Activated naive CD4-positive, alpha-beta T cell treated with anti-CD3 and anti-CD28 coated beads, Interleukin-2, amount 10 ng/mL, durations not matched to agents 7 days and 5 days (primary cell): ENCODE measurements at regions of chr9 and their contacts with region 1.

Region 1: DNA sequence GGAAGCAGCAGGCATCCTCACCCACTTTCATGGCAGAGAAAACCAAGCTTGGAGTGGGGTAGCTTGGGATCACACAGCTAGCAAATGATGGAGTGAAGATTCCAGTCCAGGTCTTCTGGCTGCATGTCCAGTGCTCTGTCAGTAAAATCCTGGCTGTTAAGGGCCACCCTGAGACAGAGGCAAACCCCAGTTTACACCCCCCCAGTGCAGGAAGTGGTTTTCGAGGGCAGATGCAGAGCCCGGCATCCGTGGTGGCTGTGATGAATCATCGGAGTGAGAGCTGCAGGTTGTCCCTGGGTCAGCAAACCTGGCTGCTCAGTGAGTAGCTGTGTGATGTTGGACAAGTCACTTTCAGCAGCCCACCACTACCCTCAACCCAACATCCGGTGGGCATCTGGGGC is 115.4 kb downstream of the RGS3 start:
- DNase-seq: peak; percentile 91
- H3K4me3 Mint-ChIP-seq: peak overlapping the region; percentile 85
- H3K27ac Mint-ChIP-seq: peak overlapping the region; percentile 96
- H3K4me1 Mint-ChIP-seq: peaks cover 81% of the 10 kb centered on the region
- H3K27me3 Mint-ChIP-seq: no peaks in the 10 kb centered on the region

Region 2: DNA sequence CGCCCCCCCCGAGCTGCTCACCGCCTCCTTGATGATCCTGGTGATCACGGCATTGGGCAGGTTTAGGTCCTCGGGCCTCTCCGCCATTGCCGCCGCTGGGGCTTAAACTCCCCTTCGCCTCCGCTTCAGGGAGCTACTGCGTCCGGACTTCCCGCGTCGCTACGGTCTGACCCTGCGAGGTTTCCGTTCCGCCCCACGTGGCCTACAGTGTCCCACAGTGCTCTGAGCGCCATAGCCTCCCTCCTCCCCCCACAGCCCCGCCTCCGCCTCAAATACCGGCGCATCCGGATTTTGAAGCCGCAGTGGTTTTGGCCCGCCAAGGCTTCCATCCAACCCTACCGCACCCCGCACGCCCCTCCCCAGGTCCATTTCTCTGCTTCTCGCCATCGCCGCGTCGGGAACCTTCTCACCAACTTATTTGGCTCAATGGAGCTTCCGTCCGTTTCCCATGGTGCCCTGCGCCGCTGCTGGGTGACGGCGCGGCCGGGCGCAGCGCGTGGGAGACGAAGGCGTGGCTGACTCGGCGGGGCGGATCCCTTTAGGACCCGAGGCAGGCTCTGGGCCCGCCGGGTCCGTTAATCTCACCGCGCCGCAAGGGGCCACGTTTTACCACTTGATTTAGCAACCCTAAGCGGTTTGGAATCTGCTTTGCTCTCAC is 168.5 kb before region 1 on chr9 and contains the starts of genes C9orf43 and POLE3:
- CTCF ChIA-PET with region 1: interaction called, 13 read pairs
- DNase-seq: peak; percentile 96
- H3K4me3 Mint-ChIP-seq: peak within 1 kb of the TSS; percentile 91
- H3K27ac Mint-ChIP-seq: peak within 1 kb of the TSS; percentile 99
- H3K4me1 Mint-ChIP-seq: peaks cover 39% of the 10 kb centered on the region
- H3K27me3 Mint-ChIP-seq: no peaks in the 10 kb centered on the region

Region 3: DNA sequence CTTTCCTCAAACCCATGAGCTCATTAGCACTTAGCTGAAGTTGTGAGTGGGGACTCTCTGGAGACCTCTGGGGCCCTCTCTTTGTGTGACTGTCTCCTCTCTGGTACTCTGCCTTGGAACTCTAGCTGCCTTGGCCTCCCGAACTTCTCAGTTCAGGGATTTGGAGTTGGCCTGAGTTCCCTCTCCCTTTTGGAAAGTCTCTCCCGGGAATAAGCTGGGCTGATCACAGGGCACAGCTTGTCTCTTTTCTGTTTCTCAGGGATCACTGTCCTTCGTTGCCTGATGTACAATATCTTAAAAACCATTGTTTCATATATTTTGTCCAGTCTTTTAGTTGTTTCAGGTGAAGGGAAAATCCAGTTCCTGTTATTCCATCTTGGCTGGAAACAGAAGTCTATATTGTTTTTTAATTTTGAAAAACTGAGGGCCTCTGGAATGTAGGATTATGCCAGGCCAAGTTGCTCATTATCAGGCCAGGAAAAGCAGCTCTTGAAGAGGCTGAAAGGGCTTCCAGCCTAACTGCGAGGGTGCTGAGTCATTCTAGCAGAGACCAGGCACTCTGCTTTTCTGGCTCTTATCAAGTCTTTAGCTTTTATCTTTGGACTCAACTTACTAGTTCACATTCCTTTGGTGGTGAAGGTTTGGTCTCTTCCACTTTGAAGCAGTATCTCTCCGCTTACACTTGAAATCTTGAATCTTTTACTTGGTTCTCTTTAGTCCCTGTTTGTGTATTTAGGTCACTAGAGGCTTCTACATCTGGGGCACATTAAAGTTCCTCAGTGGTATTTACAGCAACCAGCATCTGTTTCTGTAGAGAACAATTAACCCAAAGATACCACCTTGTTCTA is 123.7 kb before region 1 on chr9:
- CTCF ChIA-PET with region 1: interaction called, 162 read pairs
- DNase-seq: no peak
- H3K4me3 Mint-ChIP-seq: no peak overlapping the region
- H3K27ac Mint-ChIP-seq: no peak overlapping the region
- H3K4me1 Mint-ChIP-seq: peaks cover 8% of the 10 kb centered on the region
- H3K27me3 Mint-ChIP-seq: no peaks in the 10 kb centered on the region

Region 4: DNA sequence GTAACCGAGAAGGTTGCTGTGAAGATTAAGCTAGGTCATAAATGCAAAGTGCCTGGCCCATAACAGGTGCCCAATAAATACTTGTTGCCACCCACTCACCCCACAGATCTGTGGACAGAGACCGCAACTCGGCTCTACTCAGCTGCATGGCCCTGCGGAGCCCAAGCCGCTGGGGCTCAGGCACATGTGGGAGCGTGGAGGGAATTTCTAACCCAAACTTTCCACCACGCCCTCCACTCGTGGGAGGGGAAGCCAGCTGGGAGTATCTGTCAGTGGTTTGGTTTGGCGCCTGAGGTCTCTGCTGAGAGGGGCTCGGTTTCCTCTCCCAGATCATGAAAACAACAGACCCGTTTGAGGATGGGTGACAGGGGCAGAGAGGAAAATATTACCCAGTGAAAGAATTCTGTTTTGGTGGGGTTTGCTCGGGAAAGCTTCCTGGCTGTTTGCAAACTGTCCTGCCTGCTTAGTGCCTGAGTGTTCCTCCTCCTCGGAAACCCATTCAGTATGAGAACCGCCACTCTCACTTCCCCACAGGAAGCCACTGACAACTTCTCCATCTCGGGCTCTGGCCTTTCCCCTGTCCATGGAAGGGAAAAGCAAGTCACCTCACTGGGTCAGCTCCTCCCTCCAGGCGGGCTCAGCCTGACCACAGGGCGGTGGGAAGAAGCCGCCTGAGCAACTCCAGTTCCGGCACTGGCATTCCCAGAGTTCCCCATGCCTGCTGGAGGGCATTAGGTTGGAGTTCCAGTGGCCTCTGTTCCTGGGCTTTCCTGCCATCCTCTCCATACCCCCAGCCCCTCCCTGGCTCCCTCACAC is 55.3 kb before region 1 on chr9:
- CTCF ChIA-PET with region 1: interaction called, 20 read pairs
- DNase-seq: peak; percentile 51
- H3K4me3 Mint-ChIP-seq: peak overlapping the region; percentile 47
- H3K27ac Mint-ChIP-seq: peak overlapping the region; percentile 77
- H3K4me1 Mint-ChIP-seq: peaks cover 62% of the 10 kb centered on the region
- H3K27me3 Mint-ChIP-seq: no peaks in the 10 kb centered on the region

Region 5: GRCh38 chr9:113796646-113797426 is 218.0 kb after region 1 on chr9:
- CTCF ChIA-PET with region 1: no interaction called
- DNase-seq: no peak
- H3K4me3 Mint-ChIP-seq: no peak overlapping the region
- H3K27ac Mint-ChIP-seq: no peak overlapping the region
- H3K4me1 Mint-ChIP-seq: no peaks in the 10 kb centered on the region
- H3K27me3 Mint-ChIP-seq: peaks cover 6% of the 10 kb centered on the region